ENCODE measurements at regions of chr4 and their contacts with region 1.

Region 1: DNA sequence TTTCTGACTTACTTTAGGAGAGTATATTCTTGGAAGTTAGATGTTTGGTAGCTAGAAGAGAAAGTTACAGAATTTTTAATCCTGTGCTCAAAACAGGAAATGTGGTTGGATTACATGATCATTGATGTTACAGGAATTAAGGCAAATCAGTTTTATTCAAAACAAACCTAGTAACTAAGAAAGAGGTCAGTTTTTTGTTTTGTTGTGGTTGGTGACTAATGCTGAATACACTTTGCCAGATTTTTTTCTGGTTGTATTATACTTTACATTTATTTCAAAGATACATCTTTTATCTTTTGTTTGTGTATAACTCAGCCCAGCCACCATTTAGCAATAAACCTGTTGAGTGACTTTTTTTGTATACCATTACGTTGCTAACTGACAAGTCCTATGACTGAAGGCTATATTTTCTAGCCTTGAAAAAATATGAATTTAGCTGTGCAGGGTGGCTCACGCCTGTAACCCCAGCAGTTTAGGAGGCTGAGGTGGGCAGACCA is 116.7 kb downstream of the KLHL8 start:
- DNase-seq: peak in 2 of 9 experiments; percentile 45 to 69
- ATAC-seq: peak; percentile 79
- H3K4me3 ChIP-seq: no peak overlapping the region
- H3K4me3 Mint-ChIP-seq: peak overlapping the region; percentile 57
- H3K27ac ChIP-seq: peak overlapping the region; percentile 53 to 68
- H3K27ac Mint-ChIP-seq: peak overlapping the region; percentile 87
- H3K4me1 ChIP-seq: peaks cover 29% of the 10 kb centered on the region
- H3K4me1 Mint-ChIP-seq: peaks cover 46% of the 10 kb centered on the region
- H3K27me3 ChIP-seq: no peaks in the 10 kb centered on the region
- H3K27me3 Mint-ChIP-seq: no peaks in the 10 kb centered on the region
- CTCF ChIP-seq: no peak

Region 2: DNA sequence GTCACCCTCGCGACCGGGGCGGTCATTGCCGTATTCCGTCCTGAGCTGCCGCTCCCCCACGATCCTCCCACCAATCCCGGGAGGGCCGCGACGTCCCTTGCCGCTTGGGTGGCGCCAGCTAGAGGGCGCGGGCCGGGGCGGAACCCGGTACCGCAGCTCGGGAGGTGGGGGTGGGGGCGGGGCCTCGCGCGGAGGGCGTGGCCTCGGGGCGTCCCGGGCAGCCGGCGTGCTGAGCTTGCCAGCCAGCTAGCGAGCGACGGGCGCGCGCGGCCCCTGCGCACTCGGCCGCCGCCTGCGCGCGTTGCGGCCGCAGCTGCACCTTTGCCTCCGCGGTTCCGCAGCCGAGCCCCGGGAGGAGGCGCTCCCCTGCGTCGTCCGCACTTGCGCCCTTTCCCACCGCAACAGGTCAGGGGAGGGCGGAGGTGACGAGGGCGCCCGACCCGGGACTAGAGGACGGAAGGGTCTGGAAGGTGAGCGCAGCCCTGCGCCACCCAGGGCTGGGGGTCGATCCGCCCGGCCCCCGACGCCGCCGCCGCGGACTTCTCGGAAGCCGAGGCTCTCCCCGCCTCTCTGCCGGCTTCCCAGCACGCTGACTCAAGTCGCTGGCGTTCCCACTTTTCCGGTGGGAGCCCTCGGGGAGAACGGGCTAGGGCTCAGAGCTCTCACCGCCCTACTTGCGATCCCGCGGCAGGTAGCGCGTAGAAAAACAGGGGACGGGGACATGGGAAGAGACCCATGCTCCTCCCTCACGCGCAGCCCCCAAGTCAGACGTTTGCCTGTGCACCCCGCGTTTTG is 168.8 kb before region 1 on chr4 and contains the start of gene AFF1:
- CTCF ChIA-PET with region 1: interaction called, 4 read pairs
- POLR2A ChIA-PET with region 1: interaction called, 8 read pairs
- intact Hi-C with region 1: loop called in 1 of 2 experiments (anchors 1 kb)
- DNase-seq: peak; percentile 74 to 97 (median 85)
- ATAC-seq: peak; percentile 71
- H3K4me3 ChIP-seq: peak within 1 kb of the TSS; percentile 76 to 87
- H3K4me3 Mint-ChIP-seq: peak within 1 kb of the TSS; percentile 88
- H3K27ac ChIP-seq: peak within 1 kb of the TSS; percentile 81 to 85
- H3K27ac Mint-ChIP-seq: peak within 1 kb of the TSS; percentile 95
- H3K4me1 ChIP-seq: peaks cover 42% of the 10 kb centered on the region
- H3K4me1 Mint-ChIP-seq: peaks cover 50% of the 10 kb centered on the region
- H3K27me3 ChIP-seq: no peaks in the 10 kb centered on the region
- H3K27me3 Mint-ChIP-seq: no peaks in the 10 kb centered on the region
- CTCF ChIP-seq: peak; percentile 44
- total RNA-seq, gene AFF1: 32.3 to 33.8 TPM

Region 3: GRCh38 chr4:87516683-87517082 is 412.9 kb after region 1 on chr4:
- CTCF ChIA-PET with region 1: no interaction called
- POLR2A ChIA-PET with region 1: no interaction called
- intact Hi-C with region 1: no loop called
- DNase-seq: no peak
- ATAC-seq: no peak
- H3K4me3 ChIP-seq: no peak overlapping the region
- H3K4me3 Mint-ChIP-seq: no peak overlapping the region
- H3K27ac ChIP-seq: no peak overlapping the region
- H3K27ac Mint-ChIP-seq: no peak overlapping the region
- H3K4me1 ChIP-seq: no peaks in the 10 kb centered on the region
- H3K4me1 Mint-ChIP-seq: no peaks in the 10 kb centered on the region
- H3K27me3 ChIP-seq: no peaks in the 10 kb centered on the region
- H3K27me3 Mint-ChIP-seq: no peaks in the 10 kb centered on the region
- CTCF ChIP-seq: no peak